GM12878 (cell line): ENCODE measurements at regions of chr4 and their contacts with region 1.

Region 1: GRCh38 chr4:150209140-150209829 is 131.0 kb downstream of the DCLK2 start:
- DNase-seq: no peak
- ATAC-seq: peak; percentile 87
- H3K4me3 ChIP-seq: no peak overlapping the region
- H3K27ac ChIP-seq: no peak overlapping the region
- H3K4me1 ChIP-seq: no peaks in the 10 kb centered on the region
- H3K27me3 ChIP-seq: peaks cover 0 to 2% of the 10 kb centered on the region in 2 experiments; a peak in 1 of 4 replicates
- CTCF ChIP-seq: peak; percentile 54 to 62 (median 55)
- EP300 ChIP-seq: no peak
- POLR2A ChIP-seq: no peak
- RAD21 ChIP-seq: peak; percentile 84

Region 2: GRCh38 chr4:149980941-149981340 is 228.3 kb before region 1 on chr4:
- CTCF ChIA-PET with region 1: interaction called, 19 read pairs
- POLR2A ChIA-PET with region 1: no interaction called
- RAD21 ChIA-PET with region 1: interaction called, 5 read pairs
- SMC1A ChIA-PET with region 1: interaction called, 4 read pairs
- in situ Hi-C with region 1: no loop called
- intact Hi-C with region 1: no loop called
- DNase-seq: no peak
- ATAC-seq: peak; percentile 83
- H3K4me3 ChIP-seq: no peak overlapping the region
- H3K27ac ChIP-seq: no peak overlapping the region
- H3K4me1 ChIP-seq: no peaks in the 10 kb centered on the region
- H3K27me3 ChIP-seq: no peaks in the 10 kb centered on the region; a peak in 1 of 4 replicates
- CTCF ChIP-seq: peak; percentile 73 to 78 (median 75)
- EP300 ChIP-seq: no peak
- POLR2A ChIP-seq: no peak
- RAD21 ChIP-seq: peak; percentile 70

Region 3: DNA sequence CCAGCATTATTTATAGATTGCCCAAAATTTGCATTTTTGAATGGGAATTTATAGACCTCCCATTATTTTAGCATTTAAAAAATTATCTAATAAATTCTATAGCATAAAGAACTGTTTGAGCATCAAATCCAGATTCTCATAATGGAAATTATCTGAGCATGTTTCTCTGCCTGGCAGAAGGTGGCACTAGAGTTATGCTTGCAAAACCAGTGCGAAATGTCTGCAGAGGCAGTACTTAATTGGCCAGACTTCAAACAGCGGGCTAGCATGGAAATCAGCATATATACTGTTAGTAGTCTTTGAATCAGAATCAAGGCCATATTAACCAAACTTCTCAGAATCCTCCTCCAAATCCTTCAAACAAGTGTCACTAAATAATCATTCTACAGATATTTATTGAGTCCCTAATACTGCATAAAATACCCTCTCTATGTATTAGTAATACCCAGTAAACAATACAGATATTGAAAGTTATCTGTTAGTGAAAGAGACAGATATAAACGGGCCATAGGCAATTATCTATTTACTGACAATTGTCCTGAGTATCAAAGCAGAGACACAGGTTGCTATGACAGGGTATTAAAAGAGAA is 209.7 kb before region 1 on chr4:
- CTCF ChIA-PET with region 1: interaction called, 13 read pairs
- POLR2A ChIA-PET with region 1: no interaction called
- RAD21 ChIA-PET with region 1: interaction called, 4 read pairs
- SMC1A ChIA-PET with region 1: interaction called, 3 read pairs
- in situ Hi-C with region 1: no loop called
- intact Hi-C with region 1: loop called (anchors 1 kb)
- DNase-seq: no peak
- ATAC-seq: peak; percentile 63
- H3K4me3 ChIP-seq: no peak overlapping the region
- H3K27ac ChIP-seq: no peak overlapping the region
- H3K4me1 ChIP-seq: no peaks in the 10 kb centered on the region
- H3K27me3 ChIP-seq: no peaks in the 10 kb centered on the region
- CTCF ChIP-seq: peak; percentile 57 to 70 (median 61)
- EP300 ChIP-seq: no peak
- POLR2A ChIP-seq: no peak
- RAD21 ChIP-seq: peak; percentile 81

Region 4: GRCh38 chr4:150010525-150011126 is 198.7 kb before region 1 on chr4:
- CTCF ChIA-PET with region 1: interaction called, 38 read pairs
- POLR2A ChIA-PET with region 1: no interaction called
- RAD21 ChIA-PET with region 1: interaction called, 12 read pairs
- SMC1A ChIA-PET with region 1: interaction called, 17 read pairs
- in situ Hi-C with region 1: no loop called
- intact Hi-C with region 1: loop called (anchors 2 kb)
- DNase-seq: no peak
- ATAC-seq: peak; percentile 78
- H3K4me3 ChIP-seq: no peak overlapping the region
- H3K27ac ChIP-seq: no peak overlapping the region
- H3K4me1 ChIP-seq: no peaks in the 10 kb centered on the region
- H3K27me3 ChIP-seq: peaks cover 0 to 4% of the 10 kb centered on the region in 2 experiments; a peak in 1 of 4 replicates
- CTCF ChIP-seq: peak; percentile 38 to 49 (median 46); a peak in 4 of 6 replicates
- EP300 ChIP-seq: no peak
- POLR2A ChIP-seq: no peak
- RAD21 ChIP-seq: peak; percentile 71

Region 5: GRCh38 chr4:150199056-150199455 is 10.2 kb before region 1 on chr4:
- CTCF ChIA-PET with region 1: interaction called, 10 read pairs
- POLR2A ChIA-PET with region 1: no interaction called
- RAD21 ChIA-PET with region 1: no interaction called
- SMC1A ChIA-PET with region 1: interaction called, 4 read pairs
- in situ Hi-C with region 1: no loop called
- intact Hi-C with region 1: no loop called
- DNase-seq: no peak
- ATAC-seq: no peak
- H3K4me3 ChIP-seq: no peak overlapping the region
- H3K27ac ChIP-seq: no peak overlapping the region
- H3K4me1 ChIP-seq: no peaks in the 10 kb centered on the region
- H3K27me3 ChIP-seq: no peaks in the 10 kb centered on the region
- CTCF ChIP-seq: no peak
- EP300 ChIP-seq: no peak
- POLR2A ChIP-seq: no peak
- RAD21 ChIP-seq: no peak

Region 6: GRCh38 chr4:150268444-150268843 is 59.2 kb after region 1 on chr4:
- CTCF ChIA-PET with region 1: no interaction called
- POLR2A ChIA-PET with region 1: no interaction called
- RAD21 ChIA-PET with region 1: no interaction called
- SMC1A ChIA-PET with region 1: no interaction called
- in situ Hi-C with region 1: no loop called
- intact Hi-C with region 1: no loop called
- DNase-seq: no peak
- ATAC-seq: no peak
- H3K4me3 ChIP-seq: no peak overlapping the region
- H3K27ac ChIP-seq: no peak overlapping the region
- H3K4me1 ChIP-seq: no peaks in the 10 kb centered on the region
- H3K27me3 ChIP-seq: no peaks in the 10 kb centered on the region
- CTCF ChIP-seq: no peak
- EP300 ChIP-seq: no peak
- POLR2A ChIP-seq: no peak
- RAD21 ChIP-seq: no peak